AG04450 (cell line): ENCODE measurements at regions of chr2 and their contacts with region 1.

Region 1: DNA sequence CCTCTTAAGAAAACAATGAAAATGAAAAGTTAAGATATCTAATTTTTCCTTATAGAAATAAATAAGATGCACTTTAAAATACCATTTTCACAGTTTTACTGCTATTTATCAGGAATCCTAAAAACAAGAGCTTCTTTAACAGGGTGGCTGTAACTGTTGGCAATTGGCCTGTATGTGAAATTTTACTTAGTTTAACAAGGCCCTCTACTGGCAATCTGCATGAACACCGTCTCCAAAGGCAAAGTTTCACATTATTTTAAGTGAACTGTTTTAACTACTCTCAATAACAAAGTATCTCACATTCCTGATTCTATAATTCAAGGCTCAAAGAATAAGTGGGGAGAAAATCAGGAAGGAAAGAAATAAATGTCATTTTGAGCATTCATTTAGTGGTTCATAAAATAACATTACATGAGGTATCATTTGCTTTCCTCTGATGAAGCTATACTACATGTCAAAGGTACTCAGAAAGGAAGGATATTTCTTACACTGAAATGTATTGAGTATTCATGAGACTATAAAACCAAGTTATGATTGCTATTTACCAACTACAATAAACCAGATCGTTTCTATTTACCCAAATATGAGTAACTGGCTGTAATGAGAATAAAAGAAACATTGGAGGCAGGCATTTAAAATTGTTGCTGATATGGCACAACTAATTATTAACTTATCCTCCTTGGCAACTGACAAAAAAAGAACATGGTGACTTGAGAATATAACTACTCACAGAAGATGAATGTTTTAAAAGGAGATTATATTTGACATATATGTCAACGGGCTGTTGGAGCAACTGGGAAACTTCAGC is 7.0 kb downstream of the NCKAP5 start:
- DNase-seq: peak; percentile 71
- H3K4me3 ChIP-seq: no peak overlapping the region
- H3K27ac ChIP-seq: no peak overlapping the region
- H3K27me3 ChIP-seq: no peaks in the 10 kb centered on the region
- CTCF ChIP-seq: peak; percentile 79

Region 2: DNA sequence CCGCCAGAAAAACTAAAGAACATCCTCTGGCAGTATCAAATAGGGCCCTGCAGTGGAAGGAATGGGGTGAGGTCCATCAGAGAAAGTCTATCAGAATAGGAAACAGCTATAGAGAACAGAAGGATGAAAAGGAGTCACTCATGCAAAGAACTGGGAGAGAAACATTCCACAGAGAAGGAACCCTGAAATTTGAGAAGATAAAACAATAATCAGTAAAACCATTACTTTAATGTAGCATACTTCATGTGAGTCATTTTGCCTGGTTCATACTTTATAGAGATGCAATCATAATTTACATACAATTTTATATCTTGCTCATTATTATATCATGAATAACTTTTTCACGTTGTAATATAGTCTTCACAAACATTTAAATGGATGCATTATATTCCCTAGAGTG is 395.2 kb before region 1 on chr2:
- CTCF ChIA-PET with region 1: interaction called, 10 read pairs
- POLR2A ChIA-PET with region 1: no interaction called
- DNase-seq: no peak
- H3K4me3 ChIP-seq: no peak overlapping the region
- H3K27ac ChIP-seq: no peak overlapping the region
- H3K27me3 ChIP-seq: no peaks in the 10 kb centered on the region
- CTCF ChIP-seq: no peak

Region 3: GRCh38 chr2:133266041-133266925 is 295.0 kb before region 1 on chr2:
- CTCF ChIA-PET with region 1: interaction called, 26 read pairs
- POLR2A ChIA-PET with region 1: interaction called, 3 read pairs
- DNase-seq: no peak
- H3K4me3 ChIP-seq: peak overlapping the region; percentile 74
- H3K27ac ChIP-seq: peak overlapping the region; percentile 33
- H3K27me3 ChIP-seq: no peaks in the 10 kb centered on the region
- CTCF ChIP-seq: peak; percentile 49

Region 4: DNA sequence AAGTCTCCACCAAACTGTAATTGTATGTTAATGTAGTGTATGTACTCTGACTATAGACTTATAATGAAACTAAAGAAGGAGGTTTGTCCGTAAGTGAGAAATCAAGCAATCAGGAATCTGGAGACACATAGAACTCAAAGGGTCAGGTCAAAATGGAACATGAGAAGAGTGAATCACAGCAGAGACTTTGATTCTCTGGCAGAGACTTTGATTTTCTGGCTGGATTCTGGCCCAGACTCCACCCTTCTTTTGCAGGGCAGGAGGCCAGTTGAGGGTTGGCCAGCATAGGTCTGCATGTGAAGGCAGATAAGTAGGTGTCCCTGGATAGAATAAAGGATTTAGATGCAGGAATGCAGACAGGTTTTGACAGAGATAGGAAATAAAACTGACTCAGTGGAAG is 18.0 kb after region 1 on chr2:
- CTCF ChIA-PET with region 1: interaction called, 10 read pairs
- POLR2A ChIA-PET with region 1: no interaction called
- DNase-seq: peak; percentile 27
- H3K4me3 ChIP-seq: no peak overlapping the region
- H3K27ac ChIP-seq: no peak overlapping the region
- H3K27me3 ChIP-seq: no peaks in the 10 kb centered on the region
- CTCF ChIP-seq: no peak